Activated T-helper 1 cell treated with anti-CD3 and anti-CD28 coated beads, Interleukin-12 subunit alpha, Interleukin-12 subunit beta, Interleukin-2, Interleukin-4 antibody, amounts not matched to agents 30 ng/mL and 10 ng/mL and 1 ng/mL, durations not matched to agents 14 hours and 24 hours and 36 hours (primary cell): ENCODE measurements at regions of chr4 and their contacts with region 1.

Region 1: DNA sequence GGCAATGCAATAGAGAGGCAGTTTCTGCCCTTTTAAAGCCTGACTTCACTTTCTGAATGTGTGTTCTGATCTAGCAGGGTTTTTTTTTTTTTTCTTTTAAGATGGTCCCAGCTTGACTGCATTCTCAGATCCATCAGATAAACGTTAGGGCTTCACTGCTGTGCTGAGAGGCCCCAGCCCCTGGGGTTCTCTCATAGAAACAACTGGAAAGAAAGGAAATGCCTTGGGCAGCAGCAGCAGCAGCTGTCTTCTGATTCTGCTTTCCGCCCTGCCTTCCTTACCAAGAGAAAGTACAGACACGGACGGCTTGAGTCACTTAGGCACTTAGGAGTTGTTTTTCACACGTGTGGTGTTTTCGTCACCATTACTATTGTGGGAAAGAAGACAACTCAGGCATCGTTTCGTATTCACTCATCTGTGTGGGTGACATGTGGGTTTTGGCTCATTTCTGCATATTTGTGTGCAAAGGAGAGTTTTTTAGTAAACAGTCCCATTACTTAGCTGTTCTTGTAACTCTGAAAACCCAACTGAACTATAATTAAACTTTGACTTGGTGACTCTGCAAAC is 172.0 kb downstream of the PTTG2 start:
- DNase-seq: peak; percentile 80
- H3K4me3 Mint-ChIP-seq: peak overlapping the region; percentile 64
- H3K27ac Mint-ChIP-seq: peak overlapping the region; percentile 94
- H3K4me1 Mint-ChIP-seq: peaks cover 84% of the 10 kb centered on the region
- H3K27me3 Mint-ChIP-seq: peaks cover 3% of the 10 kb centered on the region

Region 2: DNA sequence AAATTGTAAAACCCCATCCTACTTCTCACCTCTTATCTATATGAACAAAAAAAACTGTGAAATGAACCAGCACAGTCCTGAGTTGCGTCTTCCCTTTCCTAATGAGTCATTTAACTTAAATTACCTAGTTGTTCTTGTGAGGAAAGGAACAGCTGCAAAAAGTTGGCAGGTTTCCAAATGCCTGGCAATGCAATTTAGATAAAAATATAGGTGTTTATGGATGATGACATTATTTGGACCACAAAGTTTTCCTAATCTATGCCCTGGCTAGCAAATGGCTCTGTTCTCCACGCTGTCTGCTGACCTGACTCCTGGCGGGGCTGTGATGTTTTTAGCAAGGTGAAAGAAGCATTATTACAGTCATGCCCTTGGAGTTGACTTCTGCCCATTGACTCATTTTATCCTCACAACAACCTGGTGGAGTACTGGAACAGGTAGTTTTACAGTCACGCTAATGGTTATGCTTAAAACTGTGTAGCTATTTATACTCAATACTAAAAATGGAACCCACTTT is 416.2 kb before region 1 on chr4:
- intact Hi-C with region 1: loop called (anchors 10 kb)
- DNase-seq: peak; percentile 9
- H3K4me3 Mint-ChIP-seq: no peak overlapping the region
- H3K27ac Mint-ChIP-seq: peak overlapping the region; percentile 88
- H3K4me1 Mint-ChIP-seq: peaks cover 24% of the 10 kb centered on the region
- H3K27me3 Mint-ChIP-seq: peaks cover 2% of the 10 kb centered on the region

Region 3: DNA sequence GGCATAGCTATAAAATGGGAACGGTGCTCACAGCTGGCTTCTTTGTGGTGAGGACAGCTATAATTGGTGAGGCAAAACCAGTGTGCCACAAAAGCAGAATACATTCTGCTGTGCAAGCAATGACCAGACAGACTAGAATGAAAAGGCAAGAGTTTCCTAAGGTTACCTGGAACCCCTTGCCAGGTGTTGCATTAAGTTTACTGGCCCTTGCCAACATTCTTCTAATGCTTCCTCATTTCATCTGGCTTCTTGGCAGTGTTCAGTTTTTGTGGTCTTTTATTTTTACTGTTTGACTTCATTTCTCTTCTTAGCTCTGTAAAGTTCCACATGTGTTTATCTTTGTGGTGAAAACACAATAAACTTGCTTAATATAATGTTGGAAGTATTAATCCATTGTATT is 40.6 kb before region 1 on chr4:
- intact Hi-C with region 1: loop called (anchors 1 kb)
- DNase-seq: no peak
- H3K4me3 Mint-ChIP-seq: no peak overlapping the region
- H3K27ac Mint-ChIP-seq: no peak overlapping the region
- H3K4me1 Mint-ChIP-seq: peaks cover 23% of the 10 kb centered on the region
- H3K27me3 Mint-ChIP-seq: no peaks in the 10 kb centered on the region

Region 4: DNA sequence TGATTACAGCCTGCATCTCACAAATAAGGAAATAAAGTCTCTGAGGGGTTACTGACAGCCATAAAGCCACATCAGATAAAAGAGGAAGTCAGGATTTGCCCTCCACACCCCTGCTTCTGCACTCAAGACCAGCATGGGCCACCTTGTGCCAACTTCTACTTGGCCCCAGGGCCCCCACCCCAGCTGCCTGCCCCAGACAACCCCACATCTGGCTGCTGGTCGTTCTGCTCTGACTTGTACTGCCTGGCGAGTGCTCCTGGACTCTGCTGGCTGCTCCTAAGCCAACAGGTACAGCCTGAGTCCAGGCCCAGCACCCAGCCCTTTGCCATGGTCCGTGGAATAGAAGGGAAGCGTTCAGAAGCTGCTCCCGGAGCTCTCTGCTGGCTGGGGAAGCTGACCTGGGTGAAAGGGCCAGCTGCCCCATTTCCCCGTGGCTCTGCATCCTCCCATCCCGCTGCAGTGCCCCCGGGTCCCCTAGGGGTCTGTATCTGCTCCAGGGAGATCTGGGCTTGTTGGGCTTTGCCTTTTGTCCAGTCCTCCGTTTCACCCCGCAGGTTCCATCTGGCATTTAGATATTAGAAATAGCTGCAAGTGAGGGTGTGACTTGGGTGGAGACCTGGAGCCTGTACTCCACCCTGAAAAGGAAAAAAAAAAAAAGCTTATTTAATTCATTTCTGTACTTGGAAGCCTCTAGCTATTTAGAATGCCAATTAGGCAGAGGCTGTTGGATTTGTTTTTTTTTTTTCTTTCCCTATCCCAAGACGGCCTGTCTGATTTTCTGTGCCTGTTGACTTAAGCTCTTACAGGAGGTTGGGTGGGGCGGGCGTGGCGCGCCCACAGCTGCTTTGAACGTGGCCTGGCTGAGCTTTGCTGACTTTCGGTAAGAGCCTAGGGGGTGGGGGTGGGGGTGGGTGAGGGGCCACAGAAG is 22.8 kb after region 1 on chr4:
- intact Hi-C with region 1: no loop called
- DNase-seq: no peak
- H3K4me3 Mint-ChIP-seq: no peak overlapping the region
- H3K27ac Mint-ChIP-seq: no peak overlapping the region
- H3K4me1 Mint-ChIP-seq: peaks cover 52% of the 10 kb centered on the region
- H3K27me3 Mint-ChIP-seq: peaks cover 18% of the 10 kb centered on the region

Region 5: DNA sequence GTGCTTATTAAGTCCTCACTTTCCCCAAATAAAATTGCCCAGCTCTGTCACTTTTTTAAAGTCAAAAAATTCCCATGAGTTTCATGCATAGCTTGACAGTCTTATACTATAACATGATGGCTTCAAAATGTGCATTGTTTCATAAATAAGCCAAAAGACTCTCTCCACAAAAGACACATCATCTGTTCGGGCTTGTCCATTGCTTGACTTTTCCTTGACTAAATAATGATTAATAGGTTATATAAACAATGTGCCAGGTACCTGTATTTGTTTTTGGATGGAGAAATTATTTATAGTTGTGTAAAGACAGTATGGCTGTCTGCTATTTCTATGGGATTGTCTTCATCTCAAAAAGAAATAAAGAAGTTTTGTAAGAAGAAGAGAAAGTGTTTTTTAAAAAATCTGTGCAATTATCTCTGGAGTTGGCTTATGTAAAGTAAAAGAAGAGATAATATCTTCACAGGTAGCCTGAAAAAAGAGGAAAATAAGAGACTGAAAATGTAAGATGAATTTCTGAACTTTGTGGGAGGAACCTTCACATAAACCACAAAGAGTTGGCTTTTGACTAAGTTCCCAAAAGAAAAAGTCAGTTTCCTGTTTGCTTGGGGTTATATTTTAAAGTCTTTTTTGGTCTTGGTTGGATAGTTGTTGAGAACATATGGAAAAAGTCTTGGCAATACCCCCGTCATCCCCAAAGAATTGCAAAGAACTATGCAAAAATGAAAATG is 202.8 kb after region 1 on chr4:
- intact Hi-C with region 1: loop called (anchors 1 kb)
- DNase-seq: no peak
- H3K4me3 Mint-ChIP-seq: peak overlapping the region; percentile 22
- H3K27ac Mint-ChIP-seq: peak overlapping the region; percentile 55
- H3K4me1 Mint-ChIP-seq: peaks cover 32% of the 10 kb centered on the region
- H3K27me3 Mint-ChIP-seq: peaks cover 42% of the 10 kb centered on the region

Region 6: DNA sequence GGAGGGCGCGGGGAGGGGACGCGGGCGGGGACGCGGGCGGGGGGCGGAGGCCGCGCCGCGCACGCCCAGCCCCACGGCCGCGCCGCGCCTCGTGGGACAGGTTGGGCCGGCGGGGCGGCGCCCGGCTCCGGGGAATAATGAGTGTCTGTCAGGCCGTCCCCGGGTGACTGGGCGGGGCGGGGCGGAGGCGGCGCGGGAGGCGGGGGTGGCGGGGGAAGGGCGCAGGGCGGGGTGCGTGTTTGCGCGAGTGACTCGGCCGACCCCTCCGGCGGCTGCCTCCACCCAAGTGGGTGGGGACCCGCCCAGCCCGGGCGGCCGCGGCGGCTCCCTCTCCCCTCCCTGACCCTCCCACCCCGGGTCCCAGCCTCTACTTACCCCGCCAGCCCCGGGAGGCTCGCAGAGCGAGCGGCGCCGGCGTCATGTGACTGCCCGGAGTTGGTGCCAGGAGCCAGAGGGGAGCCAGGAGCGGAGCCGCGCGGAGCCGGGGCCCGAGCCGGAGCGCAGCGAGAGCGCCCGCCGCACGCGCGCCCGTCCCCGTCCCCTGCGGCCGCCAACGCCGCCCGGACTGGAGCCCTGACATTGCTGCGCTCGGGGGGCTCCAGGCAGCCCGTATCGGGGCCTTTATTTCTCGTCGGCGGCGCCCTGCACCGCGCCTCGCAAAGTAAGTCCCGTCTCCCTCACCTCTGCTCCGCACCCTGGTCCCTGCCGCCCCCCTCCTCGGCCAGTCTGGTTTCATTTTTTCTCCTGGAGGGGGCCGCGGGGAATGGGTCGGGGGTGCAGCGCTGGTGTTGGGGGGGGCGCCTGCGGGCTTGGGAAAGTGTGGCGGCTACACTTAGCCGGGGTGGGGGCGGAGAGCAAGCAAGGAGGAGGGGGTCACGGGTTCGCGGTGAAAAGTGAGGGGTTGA is 531.9 kb after region 1 on chr4 and contains the start of gene KLF3:
- intact Hi-C with region 1: loop called (anchors 2 kb)
- DNase-seq: peak; percentile 86
- H3K4me3 Mint-ChIP-seq: peak within 1 kb of the TSS; percentile 85
- H3K27ac Mint-ChIP-seq: peak within 1 kb of the TSS; percentile 53
- H3K4me1 Mint-ChIP-seq: peaks cover 55% of the 10 kb centered on the region
- H3K27me3 Mint-ChIP-seq: peaks cover 24% of the 10 kb centered on the region
- total RNA-seq, gene KLF3: 1.8 and 1.9 TPM in 2 replicates

Region 7: DNA sequence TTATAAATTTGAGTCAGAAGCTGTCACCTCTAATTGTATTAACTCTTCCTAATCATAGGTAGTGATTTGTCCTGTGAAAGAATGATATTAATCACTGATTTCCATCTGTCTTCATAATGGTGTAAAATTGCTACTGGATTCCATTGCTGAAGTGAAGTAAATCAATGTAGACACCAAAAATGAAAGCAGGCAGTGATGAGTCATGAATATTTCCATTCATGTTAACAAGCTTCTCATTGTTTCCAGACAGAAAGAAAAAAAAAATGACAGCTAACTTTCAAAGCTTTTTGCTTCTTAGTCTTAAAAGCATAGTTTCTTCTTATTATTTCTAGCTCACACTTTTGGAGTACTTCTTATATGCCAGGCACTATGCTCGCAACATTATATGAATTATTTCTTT is 757.0 kb after region 1 on chr4:
- intact Hi-C with region 1: loop called (anchors 1 kb)
- DNase-seq: no peak
- H3K4me3 Mint-ChIP-seq: peak overlapping the region; percentile 63
- H3K27ac Mint-ChIP-seq: peak overlapping the region; percentile 91
- H3K4me1 Mint-ChIP-seq: peaks cover 41% of the 10 kb centered on the region
- H3K27me3 Mint-ChIP-seq: no peaks in the 10 kb centered on the region